ENCODE measurements at regions of chr11 and their contacts with region 1.

Region 1: DNA sequence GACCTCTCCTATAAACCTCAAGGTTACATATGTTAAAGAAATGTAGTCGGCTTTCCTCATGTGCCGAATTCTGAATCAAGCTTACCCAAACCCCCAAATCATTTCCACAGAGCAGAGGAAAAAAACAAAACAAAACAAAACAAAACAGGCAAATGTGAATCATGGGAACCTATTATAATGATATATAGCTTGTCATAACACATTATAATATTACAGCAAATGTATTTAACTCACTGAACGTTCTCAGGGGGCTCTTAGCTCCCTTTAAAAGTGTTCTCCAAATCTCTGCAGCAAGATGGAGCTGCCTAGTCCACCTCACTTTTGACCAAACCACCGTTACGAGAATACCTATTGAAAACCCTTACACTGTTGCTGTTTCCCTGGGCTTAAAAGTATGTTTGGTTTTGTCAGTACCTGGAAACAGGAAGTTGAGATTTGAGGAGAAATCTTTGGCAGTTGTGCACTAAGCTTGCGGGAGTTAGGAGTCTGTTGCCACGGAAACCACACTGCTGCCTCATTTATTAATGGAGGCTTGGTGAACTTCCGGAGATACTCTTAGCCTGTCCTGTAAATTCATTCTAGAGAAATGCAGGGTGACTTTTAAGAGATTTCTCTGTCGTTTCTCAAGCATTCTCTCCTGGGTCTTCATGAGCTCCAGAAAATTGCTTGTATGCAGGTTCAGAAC is 167.0 kb upstream of the RASSF10 start:
- DNase-seq: peak; percentile 62
- H3K4me3 Mint-ChIP-seq: no peak overlapping the region
- H3K27ac Mint-ChIP-seq: peak overlapping the region; percentile 83
- H3K4me1 Mint-ChIP-seq: peaks cover 47% of the 10 kb centered on the region
- H3K27me3 Mint-ChIP-seq: no peaks in the 10 kb centered on the region
- CTCF ChIP-seq: no peak

Region 2: DNA sequence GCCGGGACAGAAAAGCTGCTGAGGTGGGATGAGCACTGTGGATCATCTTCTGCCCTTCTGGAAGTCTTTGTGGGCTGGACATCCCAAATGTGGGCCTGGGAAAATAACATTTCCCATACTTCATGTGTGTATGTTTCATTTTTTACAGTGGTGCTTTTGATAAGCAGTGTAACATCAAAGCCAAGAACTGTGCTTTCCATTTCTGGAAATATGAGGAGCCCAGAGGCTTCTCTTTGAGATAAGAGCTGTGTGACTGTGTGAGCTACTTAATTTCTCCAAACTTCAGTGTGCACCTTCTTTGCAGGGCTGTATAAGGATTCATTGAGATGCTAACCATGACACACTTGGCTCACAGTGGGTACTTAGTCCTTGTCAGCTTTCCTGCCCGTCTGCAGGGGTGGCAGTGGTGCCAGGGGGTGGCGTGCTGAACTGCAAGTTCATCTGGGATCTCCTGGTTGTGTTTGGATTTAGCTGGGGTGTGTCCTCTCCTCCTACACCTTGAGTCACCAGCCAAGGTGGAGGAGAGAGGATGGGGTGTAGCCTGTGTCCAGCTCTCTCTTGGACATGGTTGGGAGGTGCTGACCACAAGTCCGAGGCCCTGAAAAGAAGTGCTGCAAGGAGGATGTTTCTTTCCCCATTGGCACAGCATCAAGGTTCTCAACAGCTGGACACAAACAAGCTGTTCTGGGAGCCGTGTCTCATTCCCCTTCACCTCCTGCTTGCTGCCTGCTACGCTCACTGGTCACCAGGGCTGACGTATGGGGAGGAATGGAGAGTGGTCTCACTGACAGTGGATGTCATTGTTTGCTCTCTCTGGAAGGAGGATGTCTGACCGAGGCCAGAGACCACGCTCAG is 28.5 kb before region 1 on chr11:
- CTCF ChIA-PET with region 1: interaction called, 11 read pairs
- POLR2A ChIA-PET with region 1: interaction called, 10 read pairs
- intact Hi-C with region 1: no loop called
- DNase-seq: peak; percentile 75
- H3K4me3 Mint-ChIP-seq: no peak overlapping the region
- H3K27ac Mint-ChIP-seq: peak overlapping the region; percentile 26
- H3K4me1 Mint-ChIP-seq: peaks cover 57% of the 10 kb centered on the region
- H3K27me3 Mint-ChIP-seq: no peaks in the 10 kb centered on the region
- CTCF ChIP-seq: peak; percentile 23

Region 3: DNA sequence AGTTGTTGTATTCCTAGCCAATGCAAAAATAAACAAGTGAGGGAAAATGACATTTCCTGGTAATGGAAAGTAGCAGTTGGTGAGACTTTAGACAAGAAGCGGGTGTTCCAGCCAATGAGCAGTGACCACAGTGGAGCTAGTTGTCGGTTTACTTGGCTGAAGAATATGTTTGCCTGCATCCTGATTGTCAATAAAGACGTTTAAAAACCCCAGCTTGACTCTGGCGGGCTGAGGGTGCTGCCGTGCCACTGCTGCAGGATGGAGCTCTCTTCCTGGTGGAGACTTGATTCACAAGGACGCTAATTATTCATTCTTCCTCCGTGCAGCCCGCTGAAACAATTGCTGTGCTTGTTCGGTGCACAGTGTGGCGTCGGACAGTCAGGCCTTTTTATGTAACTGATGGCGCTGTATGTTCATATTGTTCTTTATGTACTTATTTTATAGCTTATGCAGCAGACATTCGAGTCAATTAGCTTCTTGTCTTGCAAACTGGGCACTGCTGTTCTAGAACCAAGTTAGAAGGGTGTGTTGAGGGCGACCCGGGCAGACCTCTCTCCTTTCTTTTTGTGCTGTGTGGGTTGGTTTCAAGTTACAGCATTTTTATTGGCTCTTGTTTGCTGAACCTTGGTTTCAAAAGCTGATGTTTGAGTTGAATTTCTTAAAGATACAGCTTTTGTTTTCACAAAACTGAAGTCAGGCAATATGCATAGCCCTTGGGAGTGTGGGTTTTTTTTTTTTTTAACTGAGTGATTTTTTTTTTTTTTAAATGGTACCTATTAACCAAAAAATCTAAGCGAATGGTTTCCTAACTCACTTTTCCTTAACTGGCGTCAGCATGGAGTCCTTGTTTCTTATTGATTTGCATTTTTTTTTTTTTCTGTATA is 13.9 kb before region 1 on chr11:
- CTCF ChIA-PET with region 1: interaction called, 5 read pairs
- POLR2A ChIA-PET with region 1: interaction called, 29 read pairs
- intact Hi-C with region 1: no loop called
- DNase-seq: peak; percentile 79
- H3K4me3 Mint-ChIP-seq: peak overlapping the region; percentile 80
- H3K27ac Mint-ChIP-seq: peak overlapping the region; percentile 85
- H3K4me1 Mint-ChIP-seq: peaks cover 29% of the 10 kb centered on the region
- H3K27me3 Mint-ChIP-seq: no peaks in the 10 kb centered on the region
- CTCF ChIP-seq: no peak

Region 4: GRCh38 chr11:12864316-12865156 is 22.4 kb after region 1 on chr11:
- CTCF ChIA-PET with region 1: interaction called, 3 read pairs
- POLR2A ChIA-PET with region 1: interaction called, 10 read pairs
- intact Hi-C with region 1: no loop called
- DNase-seq: no peak
- H3K4me3 Mint-ChIP-seq: no peak overlapping the region
- H3K27ac Mint-ChIP-seq: no peak overlapping the region
- H3K4me1 Mint-ChIP-seq: peaks cover 14% of the 10 kb centered on the region
- H3K27me3 Mint-ChIP-seq: no peaks in the 10 kb centered on the region
- CTCF ChIP-seq: no peak

Measured in MCF 10A (cell line).